Activated CD8-positive, alpha-beta T cell treated with anti-CD3 and anti-CD28 coated beads, Interleukin-2, amount 10 ng/mL, durations not matched to agents 7 days and 5 days (primary cell): ENCODE measurements at regions of chr1 and their contacts with region 1.

Region 1: GRCh38 chr1:172460887-172461315 is 17.0 kb upstream of the PIGC start:
- DNase-seq: no peak
- ATAC-seq: no peak
- H3K4me3 Mint-ChIP-seq: no peak overlapping the region
- H3K27ac Mint-ChIP-seq: no peak overlapping the region
- H3K4me1 Mint-ChIP-seq: peaks cover 11% of the 10 kb centered on the region
- H3K27me3 Mint-ChIP-seq: peaks cover 18% of the 10 kb centered on the region

Region 2: GRCh38 chr1:172449585-172450534 is 11.0 kb before region 1 on chr1:
- CTCF ChIA-PET with region 1: interaction called, 11 read pairs
- POLR2A ChIA-PET with region 1: no interaction called
- DNase-seq: peak; percentile 60
- ATAC-seq: peak; percentile 92
- H3K4me3 Mint-ChIP-seq: no peak overlapping the region
- H3K27ac Mint-ChIP-seq: no peak overlapping the region
- H3K4me1 Mint-ChIP-seq: peaks cover 25% of the 10 kb centered on the region
- H3K27me3 Mint-ChIP-seq: no peaks in the 10 kb centered on the region

Region 3: GRCh38 chr1:172549621-172550280 is 88.8 kb after region 1 on chr1:
- CTCF ChIA-PET with region 1: no interaction called
- POLR2A ChIA-PET with region 1: no interaction called
- DNase-seq: no peak
- ATAC-seq: no peak
- H3K4me3 Mint-ChIP-seq: no peak overlapping the region
- H3K27ac Mint-ChIP-seq: no peak overlapping the region
- H3K4me1 Mint-ChIP-seq: peaks cover 13% of the 10 kb centered on the region
- H3K27me3 Mint-ChIP-seq: no peaks in the 10 kb centered on the region